Mammary epithelial cell (primary cell): ENCODE measurements at regions of chr15 and their contacts with region 1.

Region 1: DNA sequence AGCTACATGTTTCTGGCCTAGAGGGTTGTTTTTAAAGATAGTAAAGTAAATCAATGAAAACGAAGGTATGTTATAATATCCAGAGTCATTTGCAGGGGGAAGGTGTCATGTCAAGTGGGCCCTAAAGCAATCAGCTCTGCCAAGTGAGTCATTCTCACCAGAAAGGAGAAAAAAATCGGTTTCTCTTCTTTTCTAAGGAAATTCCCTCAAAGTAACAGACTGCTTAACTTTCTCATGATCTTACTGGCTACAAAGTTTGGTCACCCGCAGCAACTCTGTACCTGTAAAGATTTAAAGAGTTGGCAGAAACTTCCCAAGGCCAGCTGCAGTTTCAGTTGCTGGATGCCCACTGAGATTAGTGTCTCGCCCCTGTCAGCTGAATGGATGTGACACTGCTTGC is 5.5 kb upstream of the FSIP1 start:
- DNase-seq: no peak
- H3K4me3 ChIP-seq: no peak overlapping the region
- H3K27ac ChIP-seq: no peak overlapping the region
- H3K4me1 ChIP-seq: peaks cover 17% of the 10 kb centered on the region
- H3K27me3 ChIP-seq: no peaks in the 10 kb centered on the region
- CTCF ChIP-seq: no peak

Region 2: DNA sequence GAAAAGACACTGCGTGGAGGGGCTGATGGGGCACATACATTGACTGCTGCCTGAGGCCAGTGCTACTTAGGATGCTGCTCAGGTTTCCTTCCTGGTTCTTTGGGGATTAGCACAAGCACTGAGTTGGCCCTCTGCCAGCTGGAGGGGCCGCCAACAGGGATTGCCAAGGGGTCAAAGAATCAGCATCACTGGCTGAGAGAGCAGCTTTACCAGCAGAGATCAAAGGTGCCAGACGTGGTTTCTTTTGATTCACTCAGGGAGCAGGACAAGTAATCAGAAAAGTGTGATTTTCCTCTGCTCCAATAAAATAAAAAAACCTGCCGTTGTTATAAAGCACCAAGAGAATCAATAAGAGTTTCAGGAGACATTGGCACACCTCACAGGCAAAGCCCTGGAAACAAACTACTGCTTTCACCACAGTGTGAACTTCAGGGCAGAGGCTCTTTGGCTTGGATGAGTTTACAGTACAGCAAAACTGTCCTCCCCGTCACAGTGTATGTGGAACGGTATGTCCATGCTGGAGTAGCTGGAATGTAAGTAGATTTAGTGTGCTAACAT is 40.3 kb after region 1 on chr15:
- CTCF ChIA-PET with region 1: no interaction called
- dilution Hi-C with region 1: no loop called
- in situ Hi-C with region 1: no loop called
- intact Hi-C with region 1: loop called (anchors 1 kb)
- DNase-seq: no peak
- H3K4me3 ChIP-seq: no peak overlapping the region
- H3K27ac ChIP-seq: no peak overlapping the region
- H3K4me1 ChIP-seq: no peaks in the 10 kb centered on the region
- H3K27me3 ChIP-seq: no peaks in the 10 kb centered on the region
- CTCF ChIP-seq: no peak